ENCODE measurements at regions of chr3 and their contacts with region 1.

Region 1: GRCh38 chr3:194769020-194769643 is 83.4 kb downstream of the FAM43A start:
- DNase-seq: peak; percentile 59 to 98 (median 93)
- ATAC-seq: peak; percentile 99
- H3K4me3 ChIP-seq: peak overlapping the region; percentile 70
- H3K4me3 Mint-ChIP-seq: peak overlapping the region; percentile 77 to 95 (median 88)
- H3K27ac ChIP-seq: peak overlapping the region; percentile 78
- H3K27ac Mint-ChIP-seq: peak overlapping the region; percentile 57 to 98 (median 94)
- H3K4me1 ChIP-seq: peaks cover 6 to 9% of the 10 kb centered on the region in 2 donors
- H3K4me1 Mint-ChIP-seq: peaks cover 8 to 35% (median 23%) of the 10 kb centered on the region in 7 donors
- H3K27me3 ChIP-seq: no peaks in the 10 kb centered on the region
- H3K27me3 Mint-ChIP-seq: peaks cover 0 to 23% (median 7%) of the 10 kb centered on the region in 5 donors

Region 2: GRCh38 chr3:194395778-194396547 is 373.2 kb before region 1 on chr3:
- CTCF ChIA-PET with region 1: no interaction called
- POLR2A ChIA-PET with region 1: no interaction called
- intact Hi-C with region 1: loop called in 1 of 2 experiments (anchors 2 kb)
- DNase-seq: peak; percentile 29 to 86 (median 74)
- ATAC-seq: peak; percentile 85
- H3K4me3 ChIP-seq: peak overlapping the region; percentile 73
- H3K4me3 Mint-ChIP-seq: peak overlapping the region; percentile 82 to 98 (median 90)
- H3K27ac ChIP-seq: peak overlapping the region; percentile 81
- H3K27ac Mint-ChIP-seq: peak overlapping the region; percentile 73 to 98 (median 93)
- H3K4me1 ChIP-seq: peaks cover 4 to 26% of the 10 kb centered on the region in 2 donors
- H3K4me1 Mint-ChIP-seq: peaks cover 34 to 64% (median 47%) of the 10 kb centered on the region in 7 donors
- H3K27me3 ChIP-seq: no peaks in the 10 kb centered on the region
- H3K27me3 Mint-ChIP-seq: peaks cover 0 to 26% (median 0%) of the 10 kb centered on the region in 5 donors

Region 3: GRCh38 chr3:194583604-194584318 is 185.4 kb before region 1 on chr3:
- CTCF ChIA-PET with region 1: no interaction called
- POLR2A ChIA-PET with region 1: interaction called, 4 read pairs
- intact Hi-C with region 1: loop called in 1 of 2 experiments (anchors 1 kb)
- DNase-seq: peak; percentile 87 to 98 (median 92)
- ATAC-seq: peak; percentile 92
- H3K4me3 ChIP-seq: peak overlapping the region; percentile 81
- H3K4me3 Mint-ChIP-seq: peak overlapping the region; percentile 84 to 96 (median 93)
- H3K27ac ChIP-seq: peak overlapping the region; percentile 79
- H3K27ac Mint-ChIP-seq: peak overlapping the region; percentile 93 to 99 (median 96)
- H3K4me1 ChIP-seq: peaks cover 8 to 11% of the 10 kb centered on the region in 2 donors
- H3K4me1 Mint-ChIP-seq: peaks cover 8 to 30% (median 12%) of the 10 kb centered on the region in 7 donors
- H3K27me3 ChIP-seq: no peaks in the 10 kb centered on the region
- H3K27me3 Mint-ChIP-seq: no peaks in the 10 kb centered on the region

Region 4: DNA sequence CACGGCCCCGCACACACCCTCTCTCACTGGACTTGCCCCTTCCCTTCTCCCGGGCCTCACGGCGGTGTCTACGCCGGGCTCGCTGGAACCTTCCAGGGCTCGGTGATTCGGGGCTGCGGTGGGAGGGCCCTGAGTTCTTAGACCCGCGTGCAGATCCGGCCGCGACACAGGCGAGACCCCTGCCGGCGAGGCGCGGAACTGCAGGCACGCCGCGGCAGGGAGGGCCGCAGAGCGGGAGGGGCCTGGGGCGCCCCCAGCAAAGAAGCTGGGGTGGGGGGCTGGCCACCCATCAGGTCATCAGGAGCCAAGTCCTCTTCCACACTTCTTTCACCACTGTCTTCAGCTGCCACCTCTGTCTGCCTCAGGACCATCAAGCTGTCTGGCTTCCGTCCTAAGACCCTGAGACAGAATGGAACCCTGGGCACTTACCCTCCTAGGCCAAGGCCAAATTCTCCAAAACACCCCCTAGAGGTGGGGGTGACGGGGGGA is 337.3 kb after region 1 on chr3:
- CTCF ChIA-PET with region 1: no interaction called
- POLR2A ChIA-PET with region 1: no interaction called
- intact Hi-C with region 1: loop called in 1 of 2 experiments (anchors 2 kb)
- DNase-seq: peak; percentile 44 to 82 (median 70)
- ATAC-seq: peak; percentile 89
- H3K4me3 ChIP-seq: no peak overlapping the region
- H3K4me3 Mint-ChIP-seq: peak overlapping the region; percentile 10 to 71 (median 62)
- H3K27ac ChIP-seq: no peak overlapping the region
- H3K27ac Mint-ChIP-seq: peak overlapping the region in 1 of 9 donors; percentile 43
- H3K4me1 ChIP-seq: no peaks in the 10 kb centered on the region
- H3K4me1 Mint-ChIP-seq: peaks cover 5 to 10% (median 6%) of the 10 kb centered on the region in 7 donors
- H3K27me3 ChIP-seq: no peaks in the 10 kb centered on the region
- H3K27me3 Mint-ChIP-seq: no peaks in the 10 kb centered on the region

Region 5: DNA sequence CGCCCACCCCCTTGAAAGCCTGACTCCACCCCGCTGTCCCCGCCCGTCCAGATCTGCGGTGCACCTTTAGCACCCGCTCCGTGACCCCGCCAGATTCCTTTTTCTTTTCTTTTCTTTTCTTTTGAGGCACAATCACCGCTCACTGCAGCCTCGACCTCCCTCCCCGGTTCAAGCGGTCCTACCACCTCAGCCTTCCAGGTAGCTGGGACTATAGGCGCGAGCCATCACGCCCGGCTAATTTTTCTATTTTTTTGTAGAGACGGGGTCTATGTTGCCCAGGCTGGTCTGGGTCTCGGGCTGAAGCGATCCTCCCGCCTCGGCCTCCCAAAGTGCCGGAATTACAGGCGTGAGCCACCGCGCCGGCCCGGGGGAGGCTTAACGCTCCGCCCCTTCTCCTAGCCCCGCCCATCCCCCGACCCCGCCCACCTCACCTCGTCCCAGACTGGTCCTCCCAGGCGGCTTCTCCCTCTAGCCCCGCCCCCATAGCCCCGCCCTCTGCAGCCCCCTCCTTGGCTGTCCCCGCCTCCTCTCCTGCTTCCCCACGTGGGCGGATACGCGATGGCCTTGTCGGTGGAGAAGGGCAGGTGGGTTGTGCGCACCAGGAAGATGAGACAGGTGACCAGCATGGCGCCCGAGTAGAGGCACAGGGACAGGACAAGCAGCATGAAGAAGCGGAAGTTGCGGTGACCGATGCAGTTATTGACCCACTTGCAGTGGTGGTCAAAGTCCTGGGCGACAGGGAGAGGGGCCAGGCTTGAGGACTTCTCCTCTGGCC is 1438.9 kb after region 1 on chr3:
- CTCF ChIA-PET with region 1: no interaction called
- POLR2A ChIA-PET with region 1: no interaction called
- intact Hi-C with region 1: loop called in 1 of 2 experiments (anchors 10 kb)
- DNase-seq: peak in 8 of 9 donors; percentile 31 to 76 (median 48)
- ATAC-seq: peak; percentile 81
- H3K4me3 ChIP-seq: peak overlapping the region; percentile 56
- H3K4me3 Mint-ChIP-seq: peak overlapping the region; percentile 68 to 89 (median 86)
- H3K27ac ChIP-seq: no peak overlapping the region
- H3K27ac Mint-ChIP-seq: peak overlapping the region in 8 of 9 donors; percentile 32 to 86 (median 56)
- H3K4me1 ChIP-seq: peaks cover 0 to 3% of the 10 kb centered on the region in 2 donors
- H3K4me1 Mint-ChIP-seq: peaks cover 5 to 24% (median 12%) of the 10 kb centered on the region in 7 donors
- H3K27me3 ChIP-seq: no peaks in the 10 kb centered on the region
- H3K27me3 Mint-ChIP-seq: peaks cover 0 to 31% (median 0%) of the 10 kb centered on the region in 5 donors

Measured in naive thymus-derived CD4-positive, alpha-beta T cell (primary cell).